ENCODE measurements at regions of chr20 and their contacts with region 1.

Region 1: GRCh38 chr20:62793912-62794724 is 2.2 kb upstream of the MRGBP start:
- DNase-seq: peak; percentile 97
- H3K4me3 Mint-ChIP-seq: peak overlapping the region; percentile 82
- H3K27ac Mint-ChIP-seq: peak overlapping the region; percentile 94
- H3K4me1 Mint-ChIP-seq: peaks cover 28% of the 10 kb centered on the region
- H3K27me3 Mint-ChIP-seq: no peaks in the 10 kb centered on the region

Region 2: DNA sequence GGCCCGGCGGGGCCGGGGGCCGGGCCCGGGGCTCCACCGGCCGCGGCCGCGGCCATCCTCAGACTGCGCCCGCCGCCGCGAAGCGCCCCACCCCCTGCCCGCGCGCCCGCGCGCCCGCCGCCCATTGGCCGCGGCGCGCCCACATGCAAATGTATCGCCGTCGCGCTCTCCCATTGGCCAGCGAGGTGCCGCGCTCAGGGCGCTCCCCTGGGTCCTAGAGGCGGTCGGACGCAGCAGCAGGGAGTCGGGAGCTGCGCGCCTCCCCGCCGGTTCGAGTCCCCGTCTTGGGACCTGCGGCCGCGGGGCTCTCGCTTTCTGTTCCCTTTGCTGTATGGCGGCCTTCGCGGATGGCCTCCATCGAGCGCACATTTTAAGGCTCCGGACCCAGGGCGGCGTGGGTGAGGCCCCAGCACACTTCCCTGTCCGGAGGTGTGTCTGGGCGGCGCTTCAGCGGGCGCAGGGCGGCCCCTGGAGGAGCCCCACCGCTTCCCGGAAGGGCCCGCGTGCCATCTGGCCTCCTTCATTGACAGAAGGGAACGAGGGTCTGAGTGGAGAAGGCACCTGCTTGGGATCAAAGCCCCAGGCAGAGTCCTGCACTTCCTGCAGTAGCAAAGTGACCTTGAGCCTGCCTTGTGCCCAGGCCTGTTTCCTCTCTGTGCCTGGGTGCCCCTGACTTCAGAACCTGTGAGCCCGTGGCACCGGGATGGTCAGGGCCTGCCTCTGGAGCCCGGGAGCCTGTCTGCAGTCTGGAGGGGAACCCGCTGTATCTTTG is 386.7 kb before region 1 on chr20 and contains the start of gene CABLES2:
- intact Hi-C with region 1: loop called (anchors 5 kb)
- DNase-seq: peak; percentile 90
- H3K4me3 Mint-ChIP-seq: peak within 1 kb of the TSS; percentile 81
- H3K27ac Mint-ChIP-seq: peak within 1 kb of the TSS; percentile 84
- H3K4me1 Mint-ChIP-seq: peaks cover 19% of the 10 kb centered on the region
- H3K27me3 Mint-ChIP-seq: no peaks in the 10 kb centered on the region
- total RNA-seq, gene CABLES2: 12.5 and 12.6 TPM in 2 replicates

Region 3: GRCh38 chr20:62449951-62450691 is 344.0 kb before region 1 on chr20:
- intact Hi-C with region 1: no loop called
- DNase-seq: no peak
- H3K4me3 Mint-ChIP-seq: no peak overlapping the region
- H3K27ac Mint-ChIP-seq: no peak overlapping the region
- H3K4me1 Mint-ChIP-seq: no peaks in the 10 kb centered on the region
- H3K27me3 Mint-ChIP-seq: no peaks in the 10 kb centered on the region

Region 4: DNA sequence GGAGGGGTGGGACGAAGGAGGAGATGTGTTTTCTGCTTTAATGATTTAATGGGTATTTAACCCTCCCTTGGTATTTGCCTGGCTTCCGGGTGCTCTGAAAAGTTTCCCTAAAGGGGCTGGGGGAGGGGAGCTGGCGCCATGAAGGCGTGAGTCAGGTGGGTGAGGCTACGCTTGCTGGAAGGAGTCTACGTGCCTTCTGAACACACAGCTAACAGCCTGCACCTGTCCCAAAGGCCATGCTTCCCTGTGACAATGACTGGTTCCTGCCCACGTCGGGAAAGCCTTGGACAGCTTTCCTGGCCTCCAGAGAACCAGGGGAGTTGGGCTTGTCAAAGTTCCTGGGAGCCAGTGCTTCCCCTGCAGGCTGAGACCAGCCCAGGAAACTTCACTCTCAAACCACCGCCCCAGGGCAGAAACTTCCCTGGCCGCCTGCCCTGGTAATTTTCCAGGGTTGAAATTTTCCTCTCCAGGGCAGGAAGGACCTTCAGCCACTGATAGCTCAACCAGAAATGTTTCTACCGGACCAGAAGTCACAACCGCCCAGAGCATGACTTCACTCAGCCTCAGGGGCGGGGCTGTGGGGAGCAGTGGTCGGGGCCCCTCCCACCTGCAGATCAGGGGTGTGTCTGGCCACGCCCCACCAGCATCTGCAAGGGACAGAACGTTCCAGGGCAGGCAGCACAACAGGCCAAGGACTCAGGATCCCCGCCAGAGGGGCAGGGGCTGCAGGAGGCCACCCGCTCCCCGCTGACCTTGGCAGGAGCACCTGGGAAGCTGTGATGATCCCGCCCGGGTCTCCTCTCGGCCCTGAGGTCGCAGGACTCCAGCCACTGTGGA is 170.4 kb before region 1 on chr20:
- intact Hi-C with region 1: loop called (anchors 5 kb)
- DNase-seq: peak; percentile 82
- H3K4me3 Mint-ChIP-seq: peak overlapping the region; percentile 70
- H3K27ac Mint-ChIP-seq: peak overlapping the region; percentile 99
- H3K4me1 Mint-ChIP-seq: peaks cover 24% of the 10 kb centered on the region
- H3K27me3 Mint-ChIP-seq: no peaks in the 10 kb centered on the region

Region 5: GRCh38 chr20:62668441-62669027 is 125.6 kb before region 1 on chr20:
- intact Hi-C with region 1: loop called (anchors 1 kb)
- DNase-seq: no peak
- H3K4me3 Mint-ChIP-seq: no peak overlapping the region
- H3K27ac Mint-ChIP-seq: no peak overlapping the region
- H3K4me1 Mint-ChIP-seq: no peaks in the 10 kb centered on the region
- H3K27me3 Mint-ChIP-seq: no peaks in the 10 kb centered on the region

Region 6: DNA sequence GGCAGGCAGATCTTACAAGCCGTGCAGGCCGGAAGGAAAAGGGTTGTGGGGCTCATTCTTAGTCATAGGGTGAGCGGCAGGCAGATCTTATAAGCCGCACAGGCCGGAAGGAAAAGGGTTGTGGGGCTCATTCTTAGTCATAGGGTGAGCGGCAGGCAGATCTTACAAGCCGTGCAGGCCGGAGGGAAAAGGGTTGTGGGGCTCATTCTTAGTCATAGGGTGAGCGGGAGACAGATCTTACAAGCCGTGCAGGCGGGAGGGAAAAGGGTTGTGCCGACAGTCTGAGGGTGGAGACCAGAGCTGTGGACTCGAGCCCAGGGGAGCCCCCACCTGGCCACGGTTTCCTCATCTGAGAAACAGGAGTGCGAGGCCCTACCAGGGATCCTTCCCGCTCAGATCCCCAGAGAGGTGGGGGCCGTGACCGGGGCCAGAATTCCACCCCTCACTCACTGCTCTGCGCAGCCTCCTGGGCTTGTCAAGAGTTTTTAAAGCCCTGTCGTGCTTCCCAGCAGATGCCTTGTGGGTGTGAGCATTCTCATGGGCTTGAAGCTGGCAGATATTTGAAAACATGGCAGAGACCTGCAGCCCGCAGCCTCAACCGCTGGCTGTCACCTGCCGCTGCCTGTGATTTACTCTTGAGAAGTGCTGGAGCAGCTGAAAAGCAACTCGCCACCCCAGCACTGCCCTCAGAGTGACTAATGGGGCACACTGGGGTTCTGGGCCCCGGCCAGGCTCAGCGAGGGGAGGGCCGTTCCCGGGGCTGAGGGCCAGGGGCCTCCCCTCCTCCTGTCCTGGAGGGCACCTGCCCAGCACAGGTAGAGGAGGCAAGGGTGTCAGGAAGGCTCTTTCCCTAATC is 53.6 kb before region 1 on chr20:
- intact Hi-C with region 1: loop called (anchors 1 kb)
- DNase-seq: peak; percentile 90
- H3K4me3 Mint-ChIP-seq: peak overlapping the region; percentile 74
- H3K27ac Mint-ChIP-seq: peak overlapping the region; percentile 80
- H3K4me1 Mint-ChIP-seq: peaks cover 39% of the 10 kb centered on the region
- H3K27me3 Mint-ChIP-seq: peaks cover 15% of the 10 kb centered on the region

Region 7: DNA sequence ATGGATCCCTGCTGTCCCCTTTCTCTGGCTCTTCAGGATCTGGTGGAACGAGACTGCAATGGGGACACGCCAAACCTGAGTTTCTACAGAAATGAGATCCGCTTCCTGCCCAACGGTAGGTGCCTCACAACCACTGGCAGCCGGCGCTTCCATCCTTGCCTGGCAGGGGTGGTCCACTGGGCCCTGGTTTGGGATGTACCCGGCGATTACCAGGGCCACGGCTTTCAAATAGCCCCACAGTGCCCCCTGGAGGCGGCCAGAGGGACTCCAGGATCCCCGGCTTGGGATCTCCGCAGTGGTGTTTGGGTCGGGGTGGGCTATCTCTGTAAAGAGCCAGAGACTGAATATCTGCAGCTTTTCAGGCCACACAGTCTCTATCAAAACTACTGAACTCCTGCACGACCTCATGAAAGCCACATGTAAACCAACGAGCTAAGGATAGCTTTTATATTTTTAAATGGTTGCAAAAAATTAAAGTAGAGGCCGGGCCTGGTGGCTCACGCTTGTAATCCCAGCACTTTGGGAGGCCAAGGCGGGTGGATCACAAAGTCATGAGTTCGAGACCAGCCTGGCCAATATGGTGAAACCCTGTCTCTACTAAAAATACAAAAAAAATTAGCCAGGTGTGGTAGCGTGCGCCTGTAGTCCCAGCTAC is 14.2 kb after region 1 on chr20:
- intact Hi-C with region 1: loop called (anchors 1 kb)
- DNase-seq: peak; percentile 62
- H3K4me3 Mint-ChIP-seq: peak overlapping the region; percentile 57
- H3K27ac Mint-ChIP-seq: no peak overlapping the region
- H3K4me1 Mint-ChIP-seq: peaks cover 20% of the 10 kb centered on the region
- H3K27me3 Mint-ChIP-seq: no peaks in the 10 kb centered on the region

Measured in activated T-helper 2 cell treated with anti-CD3 and anti-CD28 coated beads, Interferon-gamma antibody, Interleukin-2, Interleukin-4, amounts not matched to agents 10 μg/mL and 5 μg/mL and 100 μg/mL, durations not matched to agents 14 hours and 24 hours and 36 hours (primary cell).